ENCODE measurements at regions of chr2 and their contacts with region 1.

Region 1: DNA sequence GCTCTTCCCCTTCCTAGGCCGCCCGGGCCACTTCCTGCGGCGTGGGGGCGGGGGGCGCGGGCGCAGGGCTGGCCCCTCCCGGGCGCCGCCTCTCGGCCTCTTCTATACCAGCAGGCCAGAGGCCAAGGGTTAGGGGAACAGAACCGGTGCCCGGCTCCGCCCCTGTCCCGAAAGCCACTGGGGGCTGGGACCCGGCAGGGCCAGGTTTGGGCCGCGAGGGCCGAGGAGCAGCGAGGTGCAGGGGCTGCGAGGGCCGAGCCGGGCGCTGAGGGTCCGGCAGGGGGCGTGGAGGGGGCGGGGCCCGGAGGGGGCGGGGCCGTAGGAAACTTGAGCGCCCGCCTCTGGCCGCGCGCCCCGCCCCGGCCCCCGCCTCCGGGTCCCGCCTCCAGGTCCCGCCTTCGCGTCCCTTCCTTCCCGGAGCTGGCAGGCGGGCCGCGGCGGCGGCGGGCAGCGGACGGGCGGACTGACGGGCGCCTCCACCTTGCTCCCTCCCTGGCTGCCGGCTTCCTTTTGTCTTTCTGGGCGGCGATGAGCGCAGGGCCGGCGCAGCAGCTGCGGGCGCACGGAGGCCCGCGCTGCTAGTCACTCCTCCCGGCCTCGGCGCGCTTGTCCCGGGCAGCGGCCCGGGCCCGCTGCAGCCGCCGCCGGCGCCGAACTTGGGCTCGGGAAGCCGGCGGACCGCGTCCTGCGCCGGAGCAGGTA is at the start of gene HPCAL1:
- DNase-seq: peak; percentile 80
- H3K4me3 Mint-ChIP-seq: peak within 1 kb of the TSS; percentile 98
- H3K27ac Mint-ChIP-seq: peak within 1 kb of the TSS; percentile 89
- H3K4me1 Mint-ChIP-seq: peaks cover 69% of the 10 kb centered on the region
- H3K27me3 Mint-ChIP-seq: no peaks in the 10 kb centered on the region
- total RNA-seq, gene HPCAL1: 102 and 110 TPM in 2 replicates

Region 2: DNA sequence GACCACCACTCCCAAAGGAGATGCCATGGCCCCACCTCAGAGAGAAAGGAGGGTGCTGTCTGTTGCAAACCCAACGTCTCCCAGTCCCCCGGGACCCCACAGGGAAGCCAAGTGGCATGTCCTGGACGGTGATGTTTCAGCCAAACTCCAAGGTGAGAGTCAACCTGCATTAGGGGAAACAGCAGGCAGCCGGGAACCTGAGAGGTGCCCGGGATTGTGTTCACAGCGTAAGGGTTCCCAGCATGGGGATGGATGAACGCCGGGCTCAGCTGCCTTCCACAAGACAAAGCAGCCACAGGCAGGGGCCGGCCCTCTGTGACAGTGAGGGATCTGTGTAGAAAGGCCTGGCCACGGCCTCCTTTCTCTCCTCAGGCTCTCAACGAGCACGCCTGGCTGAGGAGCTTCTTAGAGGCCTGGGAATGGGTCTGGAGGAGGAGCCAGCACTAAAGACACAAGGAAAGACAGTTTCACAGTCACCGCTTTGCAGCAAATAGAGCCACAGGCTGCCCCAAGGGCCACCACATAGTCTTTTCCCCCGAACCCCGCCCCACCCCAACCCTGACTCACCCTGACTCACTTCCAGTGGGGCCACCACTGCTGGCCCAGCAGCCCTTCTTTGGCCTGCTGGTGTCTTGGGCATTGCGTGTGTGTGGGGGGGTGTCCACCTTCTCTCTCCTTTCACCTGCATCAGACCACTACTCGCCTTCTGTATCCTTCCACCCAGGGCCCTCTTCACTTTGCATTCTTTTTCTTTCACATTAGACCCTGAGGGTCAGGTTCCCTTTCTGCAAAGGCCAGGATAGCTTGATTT is 19.5 kb before region 1 on chr2:
- intact Hi-C with region 1: loop called (anchors 2 kb)
- DNase-seq: no peak
- H3K4me3 Mint-ChIP-seq: no peak overlapping the region
- H3K27ac Mint-ChIP-seq: no peak overlapping the region
- H3K4me1 Mint-ChIP-seq: peaks cover 20% of the 10 kb centered on the region
- H3K27me3 Mint-ChIP-seq: peaks cover 3% of the 10 kb centered on the region

Region 3: DNA sequence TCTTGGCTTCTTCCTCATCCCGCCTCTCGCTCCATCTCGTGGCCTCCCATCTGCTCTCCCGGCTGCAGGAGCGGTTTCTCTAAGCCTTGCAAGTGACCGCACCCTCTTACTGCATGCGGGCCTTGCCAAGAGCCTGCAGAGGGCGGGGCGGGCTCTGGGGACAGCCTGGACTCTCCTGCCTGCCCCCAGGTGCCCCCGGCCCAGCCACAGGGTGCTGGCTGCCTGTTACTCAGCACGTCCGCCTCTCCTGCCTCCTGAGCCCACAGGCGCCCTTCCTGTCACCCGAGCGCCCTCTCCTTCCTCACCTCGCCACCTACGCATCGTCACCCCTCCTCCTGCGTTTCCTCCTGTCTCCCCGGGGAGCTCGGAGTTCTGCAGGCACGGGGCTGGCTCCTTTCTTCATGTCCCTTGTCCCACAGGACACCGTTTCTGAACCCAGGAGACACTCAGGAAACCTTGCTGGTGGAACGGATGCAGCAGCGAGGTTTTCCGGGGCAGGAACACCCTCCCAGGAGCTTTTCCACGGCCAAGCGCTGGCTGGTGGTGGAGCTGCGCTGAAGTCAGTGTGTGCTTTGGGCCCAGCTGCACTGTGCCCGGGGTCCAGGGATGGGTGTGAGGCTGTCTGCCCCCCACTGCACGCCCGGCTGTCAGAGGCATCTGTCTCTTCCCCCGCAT is 28.5 kb after region 1 on chr2:
- intact Hi-C with region 1: loop called (anchors 1 kb)
- DNase-seq: peak; percentile 64
- H3K4me3 Mint-ChIP-seq: peak overlapping the region; percentile 95
- H3K27ac Mint-ChIP-seq: peak overlapping the region; percentile 92
- H3K4me1 Mint-ChIP-seq: peaks cover 64% of the 10 kb centered on the region
- H3K27me3 Mint-ChIP-seq: no peaks in the 10 kb centered on the region

Region 4: DNA sequence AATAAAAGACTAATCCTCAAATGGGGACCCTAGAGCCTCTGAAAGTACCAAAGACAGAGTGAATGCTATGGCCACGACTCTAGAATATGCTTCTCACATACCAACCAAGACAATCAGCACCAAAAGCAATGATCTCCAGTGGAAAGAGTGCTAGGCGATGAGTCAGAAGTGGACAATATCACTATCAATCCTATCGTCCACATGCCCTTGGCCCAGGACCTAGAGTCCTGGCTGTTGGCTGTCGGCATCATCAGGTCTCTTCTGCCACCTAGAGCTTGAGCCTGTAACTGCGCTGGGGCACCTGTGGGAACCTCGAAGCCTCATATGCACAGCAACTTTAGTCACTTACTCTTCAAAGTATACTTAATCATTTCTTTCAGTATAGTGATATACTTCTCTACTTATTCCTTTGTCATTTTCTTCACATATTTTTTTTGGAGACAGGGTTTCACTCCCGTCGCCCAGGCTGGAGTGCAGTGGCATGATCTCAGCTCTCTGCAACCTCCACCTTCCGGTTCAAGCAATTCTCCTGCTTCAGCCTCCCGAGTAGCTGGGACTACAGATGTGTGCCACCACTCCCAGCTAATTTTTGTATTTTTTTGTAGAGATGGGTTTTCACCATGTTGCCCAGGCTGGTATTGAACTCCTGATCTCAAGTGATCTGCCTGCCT is 357.4 kb after region 1 on chr2:
- intact Hi-C with region 1: loop called (anchors 10 kb)
- DNase-seq: peak; percentile 30
- H3K4me3 Mint-ChIP-seq: no peak overlapping the region
- H3K27ac Mint-ChIP-seq: peak overlapping the region; percentile 35
- H3K4me1 Mint-ChIP-seq: peaks cover 17% of the 10 kb centered on the region
- H3K27me3 Mint-ChIP-seq: no peaks in the 10 kb centered on the region

Measured in activated T-helper 2 cell treated with anti-CD3 and anti-CD28 coated beads, Interferon-gamma antibody, Interleukin-2, Interleukin-4, amounts not matched to agents 10 μg/mL and 5 μg/mL and 100 μg/mL, durations not matched to agents 14 hours and 24 hours and 36 hours (primary cell).